Ascending aorta (tissue), 2 donors: ENCODE measurements at regions of chr3 and their contacts with region 1.

Region 1: GRCh38 chr3:62558549-62559112 is 185.3 kb upstream of the FEZF2 start:
- DNase-seq: no peak
- H3K4me3 ChIP-seq: no peak overlapping the region
- H3K27ac ChIP-seq: no peak overlapping the region
- H3K4me1 ChIP-seq: peaks cover 0 to 11% of the 10 kb centered on the region in 2 donors
- H3K27me3 ChIP-seq: no peaks in the 10 kb centered on the region
- CTCF ChIP-seq: peak in 1 of 3 experiments; percentile 33

Region 2: GRCh38 chr3:61251174-61251972 is 1307.3 kb before region 1 on chr3 and contains the start of gene FHIT:
- intact Hi-C with region 1: loop called (anchors 10 kb)
- DNase-seq: peak; percentile 87 to 96
- H3K4me3 ChIP-seq: peak within 1 kb of the TSS; percentile 66 to 76
- H3K27ac ChIP-seq: peak within 1 kb of the TSS; percentile 15 to 34
- H3K4me1 ChIP-seq: peaks cover 6 to 7% of the 10 kb centered on the region in 2 donors
- H3K27me3 ChIP-seq: no peaks in the 10 kb centered on the region
- CTCF ChIP-seq: no peak
- total RNA-seq, gene FHIT: 0.21 TPM

Region 3: GRCh38 chr3:62332835-62333244 is 225.8 kb before region 1 on chr3:
- intact Hi-C with region 1: loop called (anchors 2 kb)
- DNase-seq: no peak
- H3K4me3 ChIP-seq: no peak overlapping the region
- H3K27ac ChIP-seq: no peak overlapping the region
- H3K4me1 ChIP-seq: no peaks in the 10 kb centered on the region
- H3K27me3 ChIP-seq: no peaks in the 10 kb centered on the region
- CTCF ChIP-seq: peak in 2 of 3 experiments; percentile 43 to 51

Region 4: DNA sequence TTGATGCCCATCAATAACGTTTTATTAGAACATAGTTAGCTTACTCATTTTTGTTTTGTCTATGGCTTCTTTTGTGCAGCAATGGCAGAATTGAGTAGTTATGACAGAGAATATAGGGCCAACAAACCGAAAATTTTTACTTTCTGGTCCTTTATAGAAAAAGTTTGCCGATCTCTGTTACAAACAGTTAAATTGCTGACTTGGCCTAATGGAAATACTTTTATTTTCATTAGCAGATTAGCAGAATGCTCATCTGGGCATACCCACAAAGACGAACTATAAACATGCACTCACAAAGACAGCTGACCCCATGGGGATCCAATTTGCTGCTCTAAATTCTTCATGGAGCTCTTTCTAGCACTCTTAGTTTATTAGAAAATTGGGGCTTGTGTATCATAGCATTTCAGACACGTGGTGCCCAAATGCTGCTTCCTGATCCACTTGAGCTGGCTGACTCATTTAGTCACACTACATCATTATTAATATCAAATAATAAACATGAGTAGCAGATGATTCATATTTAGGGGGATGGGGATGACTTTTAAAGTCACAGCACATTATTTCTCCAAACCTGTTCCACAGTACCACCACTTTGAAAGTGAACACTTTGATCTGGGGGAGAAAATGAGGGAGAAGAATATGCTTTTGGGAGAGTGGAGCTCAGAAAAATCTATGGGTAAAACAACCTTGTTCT is 42.8 kb after region 1 on chr3:
- intact Hi-C with region 1: loop called (anchors 5 kb)
- DNase-seq: no peak
- H3K4me3 ChIP-seq: no peak overlapping the region
- H3K27ac ChIP-seq: no peak overlapping the region
- H3K4me1 ChIP-seq: no peaks in the 10 kb centered on the region
- H3K27me3 ChIP-seq: no peaks in the 10 kb centered on the region
- CTCF ChIP-seq: no peak